Activated CD4-positive, alpha-beta T cell treated with anti-CD3 and anti-CD28 coated beads for 36 hours (primary cell): ENCODE measurements at regions of chr5 and their contacts with region 1.

Region 1: GRCh38 chr5:96336351-96336985 is 96.6 kb downstream of the PCSK1 start:
- DNase-seq: peak; percentile 74
- ATAC-seq: peak; percentile 82
- H3K4me3 Mint-ChIP-seq: no peak overlapping the region
- H3K27ac Mint-ChIP-seq: no peak overlapping the region
- H3K4me1 Mint-ChIP-seq: peaks cover 9% of the 10 kb centered on the region
- H3K27me3 Mint-ChIP-seq: peaks cover 26% of the 10 kb centered on the region

Region 2: GRCh38 chr5:95511606-95512005 is 824.9 kb before region 1 on chr5:
- CTCF ChIA-PET with region 1: no interaction called
- POLR2A ChIA-PET with region 1: no interaction called
- intact Hi-C with region 1: no loop called
- DNase-seq: no peak
- ATAC-seq: no peak
- H3K4me3 Mint-ChIP-seq: no peak overlapping the region
- H3K27ac Mint-ChIP-seq: no peak overlapping the region
- H3K4me1 Mint-ChIP-seq: no peaks in the 10 kb centered on the region
- H3K27me3 Mint-ChIP-seq: no peaks in the 10 kb centered on the region

Region 3: GRCh38 chr5:95892780-95893354 is 443.6 kb before region 1 on chr5:
- CTCF ChIA-PET with region 1: interaction called, 4 read pairs
- POLR2A ChIA-PET with region 1: no interaction called
- intact Hi-C with region 1: loop called in 1 of 2 experiments (anchors 1 kb)
- DNase-seq: peak; percentile 53
- ATAC-seq: peak; percentile 71
- H3K4me3 Mint-ChIP-seq: no peak overlapping the region
- H3K27ac Mint-ChIP-seq: no peak overlapping the region
- H3K4me1 Mint-ChIP-seq: peaks cover 8% of the 10 kb centered on the region
- H3K27me3 Mint-ChIP-seq: no peaks in the 10 kb centered on the region

Region 4: DNA sequence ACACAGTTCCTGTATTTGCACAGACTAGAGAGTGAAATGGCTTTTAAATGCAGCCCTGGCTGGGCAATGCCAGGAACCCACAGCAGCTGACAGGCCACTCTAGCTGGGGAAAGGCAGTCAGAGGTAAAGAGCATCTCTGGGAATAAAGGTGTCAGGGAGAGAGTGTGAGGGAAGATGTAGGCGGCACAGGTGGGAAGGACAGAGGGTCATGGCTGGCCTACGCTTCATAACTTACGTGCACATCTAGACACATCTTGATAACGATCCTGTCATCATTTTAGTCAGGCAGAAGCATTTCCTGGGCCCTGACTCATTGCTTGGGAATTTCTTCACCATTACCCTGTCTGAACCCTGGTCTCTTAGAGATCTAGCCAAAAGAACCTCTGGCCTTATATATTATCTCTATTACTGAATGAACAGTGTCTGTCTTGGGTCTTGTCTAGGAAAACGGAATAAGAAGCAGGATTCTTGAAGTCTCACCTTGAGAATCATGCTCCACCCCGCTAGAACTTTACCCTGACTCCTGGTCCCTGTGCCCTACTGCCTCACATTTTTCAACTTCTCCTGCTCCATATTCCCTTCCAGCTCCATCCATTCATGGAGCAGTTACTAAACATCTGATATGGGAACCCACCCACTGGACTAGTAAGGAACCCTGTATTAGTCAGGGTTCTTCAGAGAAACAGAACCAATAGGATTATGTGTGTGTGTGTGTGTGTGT is 268.4 kb before region 1 on chr5:
- CTCF ChIA-PET with region 1: no interaction called
- POLR2A ChIA-PET with region 1: no interaction called
- intact Hi-C with region 1: loop called in 1 of 2 experiments (anchors 10 kb)
- DNase-seq: peak; percentile 36
- ATAC-seq: peak; percentile 62
- H3K4me3 Mint-ChIP-seq: no peak overlapping the region
- H3K27ac Mint-ChIP-seq: peak overlapping the region; percentile 87
- H3K4me1 Mint-ChIP-seq: peaks cover 52% of the 10 kb centered on the region
- H3K27me3 Mint-ChIP-seq: no peaks in the 10 kb centered on the region

Region 5: GRCh38 chr5:96220610-96221390 is 115.7 kb before region 1 on chr5:
- CTCF ChIA-PET with region 1: interaction called, 5 read pairs
- POLR2A ChIA-PET with region 1: no interaction called
- intact Hi-C with region 1: loop called in 1 of 2 experiments (anchors 5 kb)
- DNase-seq: peak; percentile 43
- ATAC-seq: peak; percentile 89
- H3K4me3 Mint-ChIP-seq: no peak overlapping the region
- H3K27ac Mint-ChIP-seq: peak overlapping the region; percentile 77
- H3K4me1 Mint-ChIP-seq: peaks cover 19% of the 10 kb centered on the region
- H3K27me3 Mint-ChIP-seq: peaks cover 13% of the 10 kb centered on the region

Region 6: DNA sequence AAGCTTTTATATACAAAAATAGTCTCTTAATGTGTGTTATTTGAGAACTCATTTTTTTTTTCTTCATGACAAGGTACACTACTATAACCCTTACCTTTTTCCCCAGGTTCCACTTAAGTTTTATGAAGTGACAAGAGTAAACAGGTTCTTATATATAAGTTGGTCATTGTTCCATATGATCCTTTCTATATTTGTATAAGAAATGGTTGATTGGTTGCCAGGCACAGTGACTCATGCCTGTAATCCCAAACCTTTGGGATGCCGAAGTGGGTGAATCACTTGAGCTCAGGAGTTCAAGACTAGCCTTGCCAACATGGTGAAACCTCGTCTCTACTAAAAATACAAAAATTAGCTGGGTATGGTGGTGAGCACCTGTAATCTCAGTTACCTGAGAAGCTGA is 11.8 kb before region 1 on chr5:
- CTCF ChIA-PET with region 1: interaction called, 28 read pairs
- POLR2A ChIA-PET with region 1: no interaction called
- intact Hi-C with region 1: no loop called
- DNase-seq: no peak
- ATAC-seq: no peak
- H3K4me3 Mint-ChIP-seq: no peak overlapping the region
- H3K27ac Mint-ChIP-seq: no peak overlapping the region
- H3K4me1 Mint-ChIP-seq: no peaks in the 10 kb centered on the region
- H3K27me3 Mint-ChIP-seq: peaks cover 17% of the 10 kb centered on the region